Activated CD4-positive, alpha-beta memory T cell treated with anti-CD3 and anti-CD28 coated beads, Interleukin-2, amount 10 ng/mL, durations not matched to agents 7 days and 5 days (primary cell): ENCODE measurements at regions of chr9 and their contacts with region 1.

Region 1: DNA sequence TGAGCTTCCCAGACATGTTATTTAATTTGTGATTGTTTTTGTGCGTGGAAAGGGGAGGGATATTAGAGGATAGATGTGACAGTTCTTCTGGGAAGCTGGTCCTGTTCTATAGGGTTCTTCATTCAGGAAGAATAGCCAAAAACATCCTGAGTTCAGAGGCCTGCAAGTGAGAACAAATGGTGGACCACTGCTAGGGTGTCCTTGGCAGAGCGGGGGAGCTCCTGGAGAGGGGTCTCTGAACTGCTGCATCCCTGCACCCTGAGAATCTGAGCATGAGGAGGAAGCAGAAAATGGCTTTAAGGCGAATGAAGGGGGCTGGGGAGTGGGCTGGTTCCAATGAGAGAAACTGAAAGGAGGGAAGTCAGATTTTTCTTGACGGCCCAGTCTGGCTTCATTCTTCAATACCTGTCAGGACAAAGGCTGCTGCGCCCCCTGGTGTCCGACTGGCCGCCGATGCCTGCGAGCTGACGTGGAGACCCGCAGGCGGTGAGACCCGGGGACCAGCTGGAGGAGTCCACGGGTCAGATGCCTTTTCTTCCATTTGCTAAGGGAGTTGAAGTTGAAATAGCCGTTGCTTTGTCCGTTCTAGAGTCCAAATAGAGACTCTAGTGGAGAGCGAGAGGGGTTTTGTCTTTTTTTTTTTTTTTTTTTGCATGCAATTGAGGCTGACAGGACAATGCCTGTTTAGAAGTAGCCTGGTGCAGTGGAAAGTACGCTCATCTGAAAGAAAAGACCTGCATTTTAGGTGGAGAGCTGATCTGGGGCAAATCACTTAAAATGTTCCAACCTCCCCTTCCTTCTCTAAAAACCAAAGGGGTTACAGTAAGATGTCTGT is 39.5 kb upstream of the NFIB start:
- DNase-seq: peak; percentile 79
- H3K4me3 Mint-ChIP-seq: no peak overlapping the region
- H3K27ac Mint-ChIP-seq: no peak overlapping the region
- H3K4me1 Mint-ChIP-seq: no peaks in the 10 kb centered on the region
- H3K27me3 Mint-ChIP-seq: peaks cover 46% of the 10 kb centered on the region

Region 2: GRCh38 chr9:13427587-13427986 is 925.9 kb before region 1 on chr9:
- CTCF ChIA-PET with region 1: interaction called, 26 read pairs
- POLR2A ChIA-PET with region 1: no interaction called
- DNase-seq: no peak
- H3K4me3 Mint-ChIP-seq: no peak overlapping the region
- H3K27ac Mint-ChIP-seq: no peak overlapping the region
- H3K4me1 Mint-ChIP-seq: no peaks in the 10 kb centered on the region
- H3K27me3 Mint-ChIP-seq: no peaks in the 10 kb centered on the region

Region 3: GRCh38 chr9:14327036-14327435 is 26.4 kb before region 1 on chr9:
- CTCF ChIA-PET with region 1: no interaction called
- POLR2A ChIA-PET with region 1: no interaction called
- DNase-seq: no peak
- H3K4me3 Mint-ChIP-seq: no peak overlapping the region
- H3K27ac Mint-ChIP-seq: no peak overlapping the region
- H3K4me1 Mint-ChIP-seq: peaks cover 9% of the 10 kb centered on the region
- H3K27me3 Mint-ChIP-seq: peaks cover 33% of the 10 kb centered on the region